ENCODE measurements at regions of chr16 and their contacts with region 1.

Region 1: GRCh38 chr16:4019371-4019791 is 96.9 kb downstream of the ADCY9 start:
- DNase-seq: no peak
- ATAC-seq: peak; percentile 60

Region 2: GRCh38 chr16:4116337-4117249 is 97.2 kb after region 1 on chr16 and contains the start of gene ADCY9:
- intact Hi-C with region 1: loop called (anchors 10 kb)
- DNase-seq: peak; percentile 87
- ATAC-seq: peak; percentile 78
- total RNA-seq, gene ADCY9: 25.9 TPM

Region 3: GRCh38 chr16:4637501-4638166 is 618.3 kb after region 1 on chr16:
- intact Hi-C with region 1: no loop called
- DNase-seq: no peak
- ATAC-seq: no peak